Activated CD4-positive, alpha-beta memory T cell treated with anti-CD3 and anti-CD28 coated beads for 36 hours (primary cell): ENCODE measurements at regions of chr2 and their contacts with region 1.

Region 1: GRCh38 chr2:143468341-143468888 is 339.2 kb downstream of the ARHGAP15 start:
- DNase-seq: no peak
- H3K4me3 Mint-ChIP-seq: no peak overlapping the region
- H3K27ac Mint-ChIP-seq: peak overlapping the region; percentile 65
- H3K4me1 Mint-ChIP-seq: peaks cover 45% of the 10 kb centered on the region
- H3K27me3 Mint-ChIP-seq: no peaks in the 10 kb centered on the region

Region 2: GRCh38 chr2:143397884-143398614 is 70.4 kb before region 1 on chr2:
- CTCF ChIA-PET with region 1: no interaction called
- POLR2A ChIA-PET with region 1: no interaction called
- intact Hi-C with region 1: loop called (anchors 2 kb)
- DNase-seq: no peak
- H3K4me3 Mint-ChIP-seq: peak overlapping the region; percentile 24
- H3K27ac Mint-ChIP-seq: peak overlapping the region; percentile 43
- H3K4me1 Mint-ChIP-seq: peaks cover 66% of the 10 kb centered on the region
- H3K27me3 Mint-ChIP-seq: no peaks in the 10 kb centered on the region

Region 3: GRCh38 chr2:143422681-143423080 is 45.7 kb before region 1 on chr2:
- CTCF ChIA-PET with region 1: no interaction called
- POLR2A ChIA-PET with region 1: no interaction called
- intact Hi-C with region 1: loop called (anchors 5 kb)
- DNase-seq: peak; percentile 15
- H3K4me3 Mint-ChIP-seq: no peak overlapping the region
- H3K27ac Mint-ChIP-seq: no peak overlapping the region
- H3K4me1 Mint-ChIP-seq: peaks cover 64% of the 10 kb centered on the region
- H3K27me3 Mint-ChIP-seq: no peaks in the 10 kb centered on the region

Region 4: DNA sequence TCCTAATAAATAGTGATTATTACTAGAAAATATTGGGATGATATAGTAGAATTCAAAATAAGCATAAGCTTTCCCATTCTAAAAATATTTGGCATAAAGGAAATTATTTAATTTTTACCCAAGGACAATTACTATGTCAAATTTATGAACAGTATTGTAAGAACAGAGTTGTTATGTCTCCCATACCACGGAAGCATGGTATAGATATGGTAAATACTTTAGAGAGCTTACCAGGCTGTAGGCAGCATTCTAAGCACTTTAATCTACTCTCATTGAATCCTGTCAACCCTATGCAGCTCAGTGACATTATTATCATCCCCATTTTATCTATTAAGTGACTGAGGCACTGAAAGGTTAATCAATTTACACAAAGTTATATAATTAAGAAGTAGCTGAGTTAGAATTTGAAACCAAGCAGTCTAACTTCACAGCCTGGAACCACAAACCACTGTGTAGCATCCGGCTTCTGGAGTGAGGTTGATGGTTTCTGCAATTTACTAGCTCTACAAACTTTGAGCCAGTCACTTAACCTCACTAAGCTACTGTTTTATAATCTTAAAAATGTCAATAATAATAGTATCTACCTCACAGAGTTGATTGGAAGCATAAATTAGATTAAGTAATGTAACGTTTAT is 15.5 kb before region 1 on chr2:
- CTCF ChIA-PET with region 1: interaction called, 3 read pairs
- POLR2A ChIA-PET with region 1: interaction called, 6 read pairs
- intact Hi-C with region 1: loop called (anchors 1 kb)
- DNase-seq: peak; percentile 65
- H3K4me3 Mint-ChIP-seq: no peak overlapping the region
- H3K27ac Mint-ChIP-seq: no peak overlapping the region
- H3K4me1 Mint-ChIP-seq: peaks cover 49% of the 10 kb centered on the region
- H3K27me3 Mint-ChIP-seq: no peaks in the 10 kb centered on the region

Region 5: DNA sequence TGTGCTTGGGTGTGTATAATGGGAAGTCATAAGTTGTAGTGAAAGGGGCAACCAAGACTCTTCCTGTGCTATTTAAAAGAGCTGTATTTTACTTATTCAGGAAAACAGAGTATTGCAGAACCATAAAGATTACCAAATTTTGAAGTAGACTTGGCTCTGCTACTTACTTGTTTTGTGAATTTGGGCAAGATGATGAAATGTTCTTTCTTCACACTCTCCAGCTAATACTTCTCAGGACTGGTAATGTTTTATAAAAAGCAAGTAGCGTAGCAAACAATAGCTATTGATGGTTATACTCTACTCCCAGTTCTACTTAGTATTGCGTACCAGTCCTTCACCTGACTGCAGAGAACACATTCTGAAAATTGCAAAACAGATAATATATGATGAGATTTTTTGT is 34.9 kb after region 1 on chr2:
- CTCF ChIA-PET with region 1: no interaction called
- POLR2A ChIA-PET with region 1: no interaction called
- intact Hi-C with region 1: no loop called
- DNase-seq: no peak
- H3K4me3 Mint-ChIP-seq: no peak overlapping the region
- H3K27ac Mint-ChIP-seq: no peak overlapping the region
- H3K4me1 Mint-ChIP-seq: peaks cover 33% of the 10 kb centered on the region
- H3K27me3 Mint-ChIP-seq: no peaks in the 10 kb centered on the region

Region 6: GRCh38 chr2:143553261-143553660 is 84.8 kb after region 1 on chr2:
- CTCF ChIA-PET with region 1: no interaction called
- POLR2A ChIA-PET with region 1: no interaction called
- intact Hi-C with region 1: loop called (anchors 5 kb)
- DNase-seq: peak; percentile 60
- H3K4me3 Mint-ChIP-seq: no peak overlapping the region
- H3K27ac Mint-ChIP-seq: no peak overlapping the region
- H3K4me1 Mint-ChIP-seq: peaks cover 15% of the 10 kb centered on the region
- H3K27me3 Mint-ChIP-seq: no peaks in the 10 kb centered on the region

Region 7: DNA sequence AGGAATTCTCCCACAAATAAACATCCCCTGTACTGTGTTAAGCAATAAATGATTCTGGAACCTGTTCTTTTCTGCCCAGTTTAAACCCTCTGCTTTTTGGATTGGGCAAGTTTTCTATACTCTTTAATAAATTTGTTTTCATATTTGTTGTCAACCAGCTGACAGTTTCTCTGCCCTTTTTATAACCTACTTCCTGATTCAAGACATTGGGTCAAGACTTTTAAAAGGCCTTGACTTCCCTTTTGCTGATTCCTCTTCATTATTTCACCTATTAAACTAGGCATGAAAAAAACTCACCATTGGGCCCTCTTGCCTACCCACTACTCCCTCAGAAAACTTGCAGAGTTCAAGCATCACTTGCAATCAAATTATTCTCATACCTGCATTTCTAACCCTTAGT is 120.3 kb after region 1 on chr2:
- CTCF ChIA-PET with region 1: no interaction called
- POLR2A ChIA-PET with region 1: no interaction called
- intact Hi-C with region 1: no loop called
- DNase-seq: no peak
- H3K4me3 Mint-ChIP-seq: no peak overlapping the region
- H3K27ac Mint-ChIP-seq: no peak overlapping the region
- H3K4me1 Mint-ChIP-seq: peaks cover 14% of the 10 kb centered on the region
- H3K27me3 Mint-ChIP-seq: no peaks in the 10 kb centered on the region

Region 8: GRCh38 chr2:143705108-143705686 is 236.8 kb after region 1 on chr2:
- CTCF ChIA-PET with region 1: no interaction called
- POLR2A ChIA-PET with region 1: no interaction called
- intact Hi-C with region 1: loop called (anchors 1 kb)
- DNase-seq: no peak
- H3K4me3 Mint-ChIP-seq: no peak overlapping the region
- H3K27ac Mint-ChIP-seq: peak overlapping the region; percentile 68
- H3K4me1 Mint-ChIP-seq: peaks cover 41% of the 10 kb centered on the region
- H3K27me3 Mint-ChIP-seq: no peaks in the 10 kb centered on the region

Region 9: GRCh38 chr2:143720095-143720664 is 251.8 kb after region 1 on chr2:
- CTCF ChIA-PET with region 1: no interaction called
- POLR2A ChIA-PET with region 1: no interaction called
- intact Hi-C with region 1: no loop called
- DNase-seq: no peak
- H3K4me3 Mint-ChIP-seq: no peak overlapping the region
- H3K27ac Mint-ChIP-seq: no peak overlapping the region
- H3K4me1 Mint-ChIP-seq: peaks cover 41% of the 10 kb centered on the region
- H3K27me3 Mint-ChIP-seq: no peaks in the 10 kb centered on the region

Region 10: DNA sequence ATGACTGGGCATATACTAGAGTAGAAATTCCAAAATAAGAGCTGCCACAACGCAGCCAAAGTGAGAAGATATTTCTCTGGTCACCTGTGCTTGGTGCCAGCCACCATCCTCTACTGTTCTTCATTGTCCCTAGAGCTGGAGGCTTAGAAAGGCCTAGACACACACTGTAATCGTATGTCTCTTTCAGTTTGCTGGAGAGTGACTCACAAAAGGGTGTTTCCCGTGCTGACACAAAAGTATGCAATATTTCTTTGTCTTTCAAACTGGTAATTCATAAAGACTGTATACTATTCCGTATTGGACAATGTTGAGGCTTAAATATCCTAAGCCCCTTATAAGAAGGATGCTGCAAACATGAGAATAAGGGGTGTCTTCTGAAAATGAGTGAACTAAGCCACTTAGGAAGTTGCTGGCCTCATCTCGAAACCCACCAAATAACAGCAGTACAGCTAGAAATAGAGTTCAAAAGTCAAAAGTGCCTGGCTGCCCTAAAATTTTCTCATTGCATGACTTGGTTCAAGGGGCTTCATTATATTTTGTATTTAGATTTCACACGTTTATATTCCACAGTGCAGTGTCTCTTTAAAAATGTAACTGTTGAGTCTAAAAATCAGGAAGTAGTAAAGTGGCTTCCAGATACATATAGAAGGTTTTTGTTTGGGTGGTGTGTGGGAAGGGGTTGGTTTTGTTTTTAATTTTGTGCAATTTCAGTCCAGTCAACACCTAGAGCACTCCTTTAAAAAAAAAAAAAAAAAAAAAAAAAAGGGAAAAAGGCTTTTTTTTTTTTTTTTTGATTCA is 261.9 kb after region 1 on chr2:
- CTCF ChIA-PET with region 1: no interaction called
- POLR2A ChIA-PET with region 1: no interaction called
- intact Hi-C with region 1: no loop called
- DNase-seq: peak; percentile 46
- H3K4me3 Mint-ChIP-seq: no peak overlapping the region
- H3K27ac Mint-ChIP-seq: peak overlapping the region; percentile 67
- H3K4me1 Mint-ChIP-seq: peaks cover 61% of the 10 kb centered on the region
- H3K27me3 Mint-ChIP-seq: no peaks in the 10 kb centered on the region